CD8-positive, alpha-beta T cell (primary cell): ENCODE measurements at regions of chr12 and their contacts with region 1.

Region 1: GRCh38 chr12:25074954-25075353 is 120.0 kb downstream of the DNAI7 start:
- DNase-seq: no peak
- ATAC-seq: no peak
- H3K4me3 ChIP-seq: no peak overlapping the region
- H3K4me3 Mint-ChIP-seq: no peak overlapping the region
- H3K27ac ChIP-seq: no peak overlapping the region
- H3K27ac Mint-ChIP-seq: peak overlapping the region; percentile 3
- H3K4me1 ChIP-seq: no peaks in the 10 kb centered on the region
- H3K4me1 Mint-ChIP-seq: peaks cover 24% of the 10 kb centered on the region
- H3K27me3 ChIP-seq: no peaks in the 10 kb centered on the region
- H3K27me3 Mint-ChIP-seq: no peaks in the 10 kb centered on the region
- CTCF ChIP-seq: no peak

Region 2: DNA sequence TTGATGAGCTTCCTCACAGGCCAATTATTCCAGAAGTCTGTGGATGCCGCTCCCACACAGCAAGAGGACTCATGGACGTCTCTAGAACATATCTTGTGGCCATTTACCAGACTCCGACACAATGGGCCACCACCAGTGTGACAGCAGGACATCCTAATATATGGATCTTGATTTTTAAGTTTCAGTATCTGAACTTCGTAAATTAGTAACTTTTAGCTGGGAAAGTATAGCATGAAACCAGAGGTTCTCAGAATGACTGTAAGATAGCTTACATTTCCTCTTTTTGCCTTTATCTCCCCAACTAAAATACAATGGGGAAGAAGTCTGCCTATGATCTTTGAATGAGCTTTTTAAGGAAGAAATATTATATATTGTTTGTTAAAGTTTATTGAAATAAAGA is 33.0 kb after region 1 on chr12:
- CTCF ChIA-PET with region 1: no interaction called
- POLR2A ChIA-PET with region 1: no interaction called
- intact Hi-C with region 1: loop called in 1 of 2 experiments (anchors 5 kb)
- DNase-seq: no peak
- ATAC-seq: no peak
- H3K4me3 ChIP-seq: no peak overlapping the region
- H3K4me3 Mint-ChIP-seq: no peak overlapping the region
- H3K27ac ChIP-seq: no peak overlapping the region
- H3K27ac Mint-ChIP-seq: peak overlapping the region; percentile 52
- H3K4me1 ChIP-seq: no peaks in the 10 kb centered on the region
- H3K4me1 Mint-ChIP-seq: no peaks in the 10 kb centered on the region
- H3K27me3 ChIP-seq: no peaks in the 10 kb centered on the region
- H3K27me3 Mint-ChIP-seq: no peaks in the 10 kb centered on the region
- CTCF ChIP-seq: no peak